Adrenal gland (tissue), 19 donors: ENCODE measurements at regions of chr12 and their contacts with region 1.

Region 1: GRCh38 chr12:80837348-80837985 is 100.3 kb downstream of the LIN7A start:
- DNase-seq: peak in 6 of 7 donors; percentile 20 to 70 (median 32)
- H3K4me3 ChIP-seq: no peak overlapping the region
- H3K27ac ChIP-seq: no peak overlapping the region
- H3K4me1 ChIP-seq: no peaks in the 10 kb centered on the region
- H3K27me3 ChIP-seq: no peaks in the 10 kb centered on the region
- CTCF ChIP-seq: peak; percentile 49 to 65 (median 58)
- POLR2A ChIP-seq: no peak

Region 2: DNA sequence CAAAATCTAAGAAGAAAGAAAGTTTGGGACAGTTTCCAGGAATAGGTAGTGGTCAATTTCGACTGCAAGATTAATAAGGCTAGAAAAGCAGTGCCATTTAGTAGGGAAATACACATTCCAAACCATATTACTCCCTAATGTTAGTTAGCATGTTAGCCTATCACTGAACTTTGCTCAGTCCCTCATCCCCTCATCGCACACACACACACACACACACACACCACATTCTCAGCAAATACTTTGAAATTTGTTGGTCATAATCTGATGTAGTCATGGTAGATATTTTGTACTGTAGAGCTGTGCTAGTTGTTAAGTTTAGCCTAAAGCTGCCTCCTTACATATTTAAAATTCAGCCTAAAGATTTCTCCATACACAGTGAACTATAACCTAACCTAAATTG is 56.7 kb before region 1 on chr12:
- intact Hi-C with region 1: no loop called
- DNase-seq: no peak
- H3K4me3 ChIP-seq: no peak overlapping the region
- H3K27ac ChIP-seq: no peak overlapping the region
- H3K4me1 ChIP-seq: peaks cover 8 to 10% of the 10 kb centered on the region in 2 donors
- H3K27me3 ChIP-seq: no peaks in the 10 kb centered on the region
- CTCF ChIP-seq: no peak
- POLR2A ChIP-seq: no peak

Region 3: GRCh38 chr12:81229758-81230157 is 392.3 kb after region 1 on chr12:
- intact Hi-C with region 1: no loop called
- DNase-seq: no peak
- H3K4me3 ChIP-seq: no peak overlapping the region
- H3K27ac ChIP-seq: no peak overlapping the region
- H3K4me1 ChIP-seq: no peaks in the 10 kb centered on the region
- H3K27me3 ChIP-seq: no peaks in the 10 kb centered on the region
- CTCF ChIP-seq: no peak
- POLR2A ChIP-seq: no peak

Region 4: DNA sequence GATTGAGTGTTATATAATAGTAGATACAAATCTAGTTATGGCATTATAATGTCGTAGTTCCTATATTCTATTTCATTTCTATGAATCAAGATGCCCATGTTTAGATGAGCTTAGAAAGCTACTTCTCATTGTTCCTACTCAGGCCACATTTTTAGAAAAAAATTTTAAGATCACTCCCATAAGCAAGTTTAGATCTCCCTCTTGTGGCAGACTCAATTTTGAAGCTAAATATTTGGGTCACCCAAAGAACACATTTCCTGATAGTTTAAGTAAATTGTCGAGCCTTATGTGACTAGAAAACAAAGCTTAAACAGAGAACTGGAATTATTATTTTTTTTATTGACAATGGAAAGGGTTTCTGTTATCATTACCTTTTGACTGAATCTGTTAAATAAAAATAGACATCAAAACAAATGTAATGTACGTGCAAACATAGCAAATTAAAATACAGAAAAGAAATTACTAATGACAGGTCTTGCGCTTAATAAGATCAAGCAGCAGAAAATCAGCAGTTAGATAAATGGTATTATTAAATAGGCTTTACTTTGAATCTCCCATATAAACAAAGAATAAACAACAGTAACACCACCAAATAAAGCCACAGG is 420.6 kb after region 1 on chr12:
- intact Hi-C with region 1: loop called in 1 of 2 experiments (anchors 5 kb)
- DNase-seq: peak in 1 of 7 donors; percentile 26
- H3K4me3 ChIP-seq: no peak overlapping the region
- H3K27ac ChIP-seq: no peak overlapping the region
- H3K4me1 ChIP-seq: peaks cover 0 to 9% of the 10 kb centered on the region in 2 donors
- H3K27me3 ChIP-seq: no peaks in the 10 kb centered on the region
- CTCF ChIP-seq: peak; percentile 30 to 73 (median 54)
- POLR2A ChIP-seq: no peak